ENCODE measurements at regions of chr12 and their contacts with region 1.

Region 1: DNA sequence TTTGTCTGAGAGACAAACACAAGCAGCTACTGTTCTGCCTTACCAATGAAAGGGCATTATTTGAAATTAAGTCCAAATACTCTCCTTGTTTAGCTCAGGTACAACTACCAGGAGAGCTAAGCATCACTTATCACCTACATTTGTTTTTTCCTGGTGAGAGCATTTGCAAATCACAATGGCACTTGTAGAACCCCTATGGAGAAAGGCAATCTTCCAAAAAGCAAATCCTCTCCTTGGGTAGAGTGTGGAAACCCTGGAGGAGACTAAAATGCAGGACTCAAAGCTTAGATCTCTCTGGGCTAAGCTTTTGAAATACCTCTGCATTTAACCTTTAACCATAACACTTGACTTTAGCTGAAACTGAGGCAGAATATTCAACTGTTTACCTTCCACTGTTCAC is 20.8 kb downstream of the GTSF1 start:
- DNase-seq: no peak
- H3K4me3 ChIP-seq: no peak overlapping the region
- H3K4me3 Mint-ChIP-seq: no peak overlapping the region
- H3K27ac ChIP-seq: no peak overlapping the region
- H3K27ac Mint-ChIP-seq: no peak overlapping the region
- H3K4me1 ChIP-seq: peaks cover 8% of the 10 kb centered on the region in 2 donors
- H3K4me1 Mint-ChIP-seq: peaks cover 14% of the 10 kb centered on the region
- H3K27me3 ChIP-seq: no peaks in the 10 kb centered on the region
- H3K27me3 Mint-ChIP-seq: peaks cover 0 to 3% (median 0%) of the 10 kb centered on the region in 3 donors
- CTCF ChIP-seq: no peak

Region 2: DNA sequence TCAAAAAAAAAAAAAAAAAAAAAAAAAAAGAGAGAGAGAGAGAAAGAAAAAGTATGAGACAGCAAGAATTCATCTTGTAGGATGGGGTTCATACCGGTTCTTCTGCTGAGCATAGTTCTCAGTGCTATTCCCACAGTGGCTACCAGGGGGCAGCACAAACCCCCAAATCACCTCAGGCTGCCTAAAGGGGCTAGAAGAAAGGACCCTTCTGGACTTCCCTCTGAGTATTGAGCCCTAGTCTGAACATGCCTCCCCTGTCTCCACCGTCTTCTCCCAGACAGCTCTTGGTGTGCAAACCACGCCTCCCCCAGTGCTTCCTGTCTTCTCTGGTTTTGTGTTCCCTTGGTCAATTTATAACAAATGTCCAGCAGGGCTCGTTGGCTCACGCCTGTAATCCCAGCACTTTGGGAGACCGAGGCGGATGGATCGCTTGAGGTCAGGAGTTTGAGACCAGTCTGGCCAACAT is 232.5 kb before region 1 on chr12:
- intact Hi-C with region 1: loop called in 1 of 2 experiments (anchors 10 kb)
- DNase-seq: peak in 2 of 3 donors; percentile 52 to 56
- H3K4me3 ChIP-seq: no peak overlapping the region
- H3K4me3 Mint-ChIP-seq: peak overlapping the region in 1 of 2 donors; percentile 34
- H3K27ac ChIP-seq: no peak overlapping the region
- H3K27ac Mint-ChIP-seq: peak overlapping the region in 1 of 7 donors; percentile 19
- H3K4me1 ChIP-seq: peaks cover 28 to 30% of the 10 kb centered on the region in 2 donors
- H3K4me1 Mint-ChIP-seq: peaks cover 34% of the 10 kb centered on the region
- H3K27me3 ChIP-seq: peaks cover 3 to 40% of the 10 kb centered on the region in 2 donors
- H3K27me3 Mint-ChIP-seq: peaks cover 33 to 49% (median 48%) of the 10 kb centered on the region in 3 donors
- CTCF ChIP-seq: peak; percentile 74

Region 3: GRCh38 chr12:55362675-55363074 is 910.0 kb after region 1 on chr12 and contains the start of gene OR6C75:
- intact Hi-C with region 1: no loop called
- DNase-seq: no peak
- H3K4me3 ChIP-seq: no peak within 1 kb of the TSS
- H3K4me3 Mint-ChIP-seq: no peak within 1 kb of the TSS
- H3K27ac ChIP-seq: no peak within 1 kb of the TSS
- H3K27ac Mint-ChIP-seq: no peak within 1 kb of the TSS
- H3K4me1 ChIP-seq: no peaks in the 10 kb centered on the region
- H3K4me1 Mint-ChIP-seq: no peaks in the 10 kb centered on the region
- H3K27me3 ChIP-seq: peaks cover 0 to 3% of the 10 kb centered on the region in 2 donors
- H3K27me3 Mint-ChIP-seq: peaks cover 3 to 13% (median 5%) of the 10 kb centered on the region in 3 donors
- CTCF ChIP-seq: no peak
- polyA plus RNA-seq, gene OR6C75: not detected

Measured in CD14-positive monocyte (primary cell).